ENCODE measurements at regions of chr2 and their contacts with region 1.

Region 1: DNA sequence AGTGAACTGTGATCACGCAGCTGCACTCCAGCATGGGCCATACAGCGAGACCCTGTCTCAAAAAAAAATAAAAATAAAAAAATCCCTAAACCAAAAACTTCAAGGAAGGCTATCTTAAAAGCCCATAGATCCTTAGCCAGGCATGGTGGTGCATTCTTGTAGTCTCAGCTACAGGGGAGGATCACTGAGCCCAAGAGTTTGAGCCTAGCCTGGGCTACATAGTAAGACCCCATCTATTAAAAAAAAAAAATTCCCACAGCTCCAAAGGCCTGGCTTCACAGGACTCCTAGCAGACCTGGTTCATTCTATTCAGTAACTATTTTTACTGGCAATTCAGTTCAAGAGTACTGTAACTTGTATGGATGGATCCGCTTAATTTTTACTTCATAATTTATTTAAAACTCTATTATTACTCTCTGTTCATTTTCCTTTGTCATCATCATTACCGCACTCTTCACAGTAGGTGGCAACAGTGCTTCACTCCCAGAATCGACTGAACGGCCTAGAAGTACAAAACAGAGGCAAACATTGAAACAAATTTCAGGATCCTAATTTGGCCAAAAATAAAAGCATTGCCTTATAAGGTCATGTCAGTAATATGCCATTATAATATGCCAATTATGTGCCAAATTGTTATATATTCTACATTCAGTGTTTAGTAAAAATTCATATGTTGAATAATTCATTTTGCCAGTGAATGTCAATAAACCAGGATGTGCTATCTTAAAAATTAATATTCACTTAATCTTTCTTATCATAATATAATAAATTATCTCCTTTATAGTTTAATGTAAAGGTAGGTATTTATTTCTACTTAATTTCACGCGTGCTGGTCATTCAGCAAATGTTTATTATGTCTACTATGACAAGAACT is 14.3 kb upstream of the STAM2 start:
- DNase-seq: peak; percentile 30 to 59 (median 42)
- ATAC-seq: peak; percentile 95
- H3K4me3 ChIP-seq: no peak overlapping the region
- H3K27ac ChIP-seq: no peak overlapping the region
- H3K4me1 ChIP-seq: no peaks in the 10 kb centered on the region
- H3K27me3 ChIP-seq: no peaks in the 10 kb centered on the region; a peak in 2 of 5 replicates
- CTCF ChIP-seq: peak; percentile 66 to 86 (median 73)
- EP300 ChIP-seq: no peak
- POLR2A ChIP-seq: no peak
- RAD21 ChIP-seq: peak; percentile 93 to 95

Region 2: DNA sequence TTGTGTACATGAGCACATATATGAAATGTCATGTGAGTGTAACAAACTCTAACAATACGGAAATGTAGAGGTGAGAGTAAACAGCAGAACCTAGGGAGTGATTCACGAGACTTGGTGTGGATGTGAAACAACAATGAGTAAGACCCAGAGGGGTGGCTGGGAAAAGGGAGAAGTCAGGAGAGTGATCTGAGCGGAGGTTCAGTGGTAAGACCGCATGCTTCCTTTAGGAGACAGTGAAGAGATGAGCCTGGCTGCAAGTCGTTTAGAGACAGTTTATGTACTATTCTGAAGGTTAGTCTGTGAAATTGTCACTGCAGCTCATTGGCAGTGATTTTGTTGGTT is 376.8 kb after region 1 on chr2:
- CTCF ChIA-PET with region 1: no interaction called
- POLR2A ChIA-PET with region 1: no interaction called
- in situ Hi-C with region 1: loop called (anchors 10 kb)
- intact Hi-C with region 1: loop called (anchors 5 kb)
- DNase-seq: no peak
- ATAC-seq: peak; percentile 20; the same call in 1 of the 3 replicates
- H3K4me3 ChIP-seq: no peak overlapping the region
- H3K27ac ChIP-seq: no peak overlapping the region
- H3K4me1 ChIP-seq: no peaks in the 10 kb centered on the region
- H3K27me3 ChIP-seq: peaks cover 3 to 4% of the 10 kb centered on the region in 2 experiments; a peak in 2 of 5 replicates
- CTCF ChIP-seq: no peak
- EP300 ChIP-seq: no peak
- POLR2A ChIP-seq: no peak
- RAD21 ChIP-seq: no peak

Region 3: DNA sequence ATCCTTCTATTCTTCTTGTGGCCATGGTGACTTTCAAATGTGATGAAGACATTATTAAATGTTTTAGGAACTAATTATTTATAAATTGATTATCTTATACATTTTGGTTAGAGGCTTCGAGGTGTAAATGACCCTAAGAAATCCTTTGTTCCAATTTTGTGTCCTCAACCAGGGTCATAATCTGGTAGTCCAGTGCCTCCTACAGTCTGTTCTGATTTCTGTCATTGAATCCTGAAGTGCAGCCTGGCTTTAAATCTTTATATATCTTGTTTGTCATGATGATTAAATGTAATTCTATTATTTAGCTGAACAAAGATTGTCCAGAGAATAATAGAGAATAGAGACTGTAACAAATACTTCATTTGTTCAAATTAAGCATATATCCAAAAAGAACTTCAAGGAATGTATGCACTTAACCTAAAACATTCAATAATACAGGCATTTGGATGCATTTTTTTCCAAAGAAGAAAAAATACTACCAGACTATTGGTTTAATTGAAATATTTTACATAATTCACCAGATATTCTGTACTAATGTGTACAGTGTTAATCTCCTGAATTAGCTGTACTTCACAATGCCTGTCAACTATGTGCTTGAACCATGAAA is 437.6 kb after region 1 on chr2:
- CTCF ChIA-PET with region 1: interaction called, 25 read pairs
- POLR2A ChIA-PET with region 1: no interaction called
- in situ Hi-C with region 1: no loop called
- intact Hi-C with region 1: loop called (anchors 1 kb)
- DNase-seq: peak in 3 of 4 experiments; percentile 30 to 38 (median 33)
- ATAC-seq: peak; percentile 83
- H3K4me3 ChIP-seq: no peak overlapping the region
- H3K27ac ChIP-seq: no peak overlapping the region
- H3K4me1 ChIP-seq: no peaks in the 10 kb centered on the region; a peak in 1 of 5 replicates
- H3K27me3 ChIP-seq: peaks cover 9 to 11% of the 10 kb centered on the region in 2 experiments; a peak in 4 of 5 replicates
- CTCF ChIP-seq: peak; percentile 43 to 73 (median 57); a peak in 4 of 6 replicates
- EP300 ChIP-seq: no peak
- POLR2A ChIP-seq: no peak
- RAD21 ChIP-seq: peak; percentile 86 to 91

Region 4: DNA sequence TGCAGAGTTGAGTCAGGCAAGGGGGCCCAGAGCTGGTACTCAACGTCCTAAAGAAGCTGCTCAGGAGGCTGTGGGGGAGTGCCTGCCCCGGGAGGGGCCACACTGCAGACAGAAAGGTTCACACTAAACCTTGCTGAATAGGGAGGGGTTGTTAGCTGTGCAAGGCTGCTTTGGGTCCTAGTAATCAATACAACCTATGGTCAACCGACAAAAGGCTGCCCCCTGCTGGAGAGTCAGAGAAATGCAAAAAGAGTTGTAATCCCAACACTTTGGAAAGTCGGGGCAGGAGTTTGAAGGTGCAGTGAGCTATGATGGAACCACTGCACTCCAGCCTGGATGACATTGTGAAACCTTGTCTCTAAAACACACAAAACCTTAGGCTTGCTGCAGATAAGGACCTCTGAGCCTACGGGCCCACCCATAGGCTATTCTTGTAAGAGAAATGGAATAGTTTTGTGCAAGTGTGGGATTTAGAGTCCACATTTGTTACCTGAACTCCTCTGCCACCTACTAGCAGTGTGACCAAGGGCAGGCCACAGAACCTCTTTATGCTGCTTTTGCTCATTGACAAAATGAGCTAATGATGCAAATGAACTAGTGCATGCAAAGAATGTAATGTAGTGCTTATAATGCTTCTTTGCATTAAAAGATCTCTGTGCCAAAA is 445.9 kb after region 1 on chr2:
- CTCF ChIA-PET with region 1: interaction called, 20 read pairs
- POLR2A ChIA-PET with region 1: no interaction called
- in situ Hi-C with region 1: loop called (anchors 5 kb)
- intact Hi-C with region 1: no loop called
- DNase-seq: peak; percentile 73 to 84 (median 78)
- ATAC-seq: peak; percentile 84
- H3K4me3 ChIP-seq: no peak overlapping the region
- H3K27ac ChIP-seq: no peak overlapping the region
- H3K4me1 ChIP-seq: no peaks in the 10 kb centered on the region
- H3K27me3 ChIP-seq: peaks cover 10 to 18% of the 10 kb centered on the region in 2 experiments; a peak in 3 of 5 replicates
- CTCF ChIP-seq: peak; percentile 74 to 85 (median 84)
- EP300 ChIP-seq: no peak
- POLR2A ChIP-seq: no peak
- RAD21 ChIP-seq: peak; percentile 82 to 89

Region 5: GRCh38 chr2:152644189-152644873 is 454.5 kb after region 1 on chr2:
- CTCF ChIA-PET with region 1: no interaction called
- POLR2A ChIA-PET with region 1: no interaction called
- in situ Hi-C with region 1: loop called (anchors 5 kb)
- intact Hi-C with region 1: no loop called
- DNase-seq: no peak
- ATAC-seq: no peak
- H3K4me3 ChIP-seq: no peak overlapping the region
- H3K27ac ChIP-seq: no peak overlapping the region
- H3K4me1 ChIP-seq: no peaks in the 10 kb centered on the region
- H3K27me3 ChIP-seq: peaks cover 6 to 7% of the 10 kb centered on the region in 2 experiments; a peak in 3 of 5 replicates
- CTCF ChIP-seq: no peak
- EP300 ChIP-seq: no peak
- POLR2A ChIP-seq: no peak
- RAD21 ChIP-seq: no peak

Measured in K562 (cell line).